ENCODE measurements at regions of chr10 and their contacts with region 1.

Region 1: DNA sequence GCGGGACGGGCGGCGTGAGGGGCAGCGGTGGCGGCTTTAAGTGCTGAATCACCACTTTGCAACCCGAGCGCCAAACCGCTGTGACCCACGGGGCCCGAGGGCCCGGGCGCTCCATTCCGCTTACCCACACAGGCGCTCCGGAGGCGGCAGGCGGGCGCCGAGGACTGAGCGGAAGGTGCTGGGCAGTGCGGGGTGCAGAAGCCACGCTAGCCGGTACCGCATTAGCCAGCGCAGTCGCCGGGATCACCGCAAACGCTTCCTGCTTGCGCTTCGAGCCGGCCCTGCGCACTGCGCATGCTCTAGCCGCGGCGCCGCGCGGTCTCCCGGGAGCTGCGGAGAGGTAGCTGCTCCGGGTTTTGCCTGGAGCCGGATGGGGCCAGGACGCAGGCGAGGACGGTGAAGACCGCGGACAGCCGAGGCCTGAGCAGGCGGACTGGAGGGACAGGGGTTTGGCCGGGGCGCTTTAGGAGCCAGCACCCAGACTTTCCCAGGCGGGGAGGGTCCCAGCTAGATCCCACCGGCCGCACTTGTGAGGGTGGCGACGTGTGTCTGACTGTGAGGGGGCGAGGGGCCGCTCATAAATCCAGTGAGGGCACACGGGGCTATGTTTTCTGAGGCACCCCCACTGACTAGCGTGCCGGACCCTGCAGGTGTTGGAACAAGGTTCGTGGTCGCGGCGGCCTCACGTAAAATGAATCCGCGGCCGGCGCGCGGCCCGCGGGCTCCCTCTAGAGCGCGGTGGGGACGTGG is at the start of gene IDE:
- DNase-seq: peak; percentile 94

Region 2: GRCh38 chr10:92517034-92517655 is 56.8 kb before region 1 on chr10:
- CTCF ChIA-PET with region 1: interaction called, 16 read pairs
- POLR2A ChIA-PET with region 1: interaction called, 7 read pairs
- DNase-seq: peak; percentile 76

Region 3: GRCh38 chr10:92592761-92593618 is 19.0 kb after region 1 on chr10 and contains the start of gene KIF11:
- CTCF ChIA-PET with region 1: interaction called, 4 read pairs
- POLR2A ChIA-PET with region 1: interaction called, 39 read pairs
- DNase-seq: peak; percentile 92

Region 4: GRCh38 chr10:92619368-92619767 is 45.4 kb after region 1 on chr10:
- CTCF ChIA-PET with region 1: no interaction called
- POLR2A ChIA-PET with region 1: no interaction called
- DNase-seq: no peak

Region 5: GRCh38 chr10:92657024-92657423 is 83.1 kb after region 1 on chr10:
- CTCF ChIA-PET with region 1: no interaction called
- POLR2A ChIA-PET with region 1: no interaction called
- DNase-seq: no peak